ENCODE measurements at regions of chr19 and their contacts with region 1.

Region 1: GRCh38 chr19:32570081-32570785 is 10.8 kb upstream of the PDCD5 start:
- DNase-seq: peak in 1 of 2 donors; percentile 34
- ATAC-seq: peak in 7 of 8 donors; percentile 51 to 84 (median 76)
- H3K4me3 ChIP-seq: no peak overlapping the region
- H3K27ac ChIP-seq: no peak overlapping the region
- H3K4me1 ChIP-seq: peaks cover 0 to 3% (median 0%) of the 10 kb centered on the region in 9 donors
- H3K27me3 ChIP-seq: peaks cover 0 to 40% (median 32%) of the 10 kb centered on the region in 7 donors
- CTCF ChIP-seq: peak; percentile 14 to 76 (median 64)

Region 2: DNA sequence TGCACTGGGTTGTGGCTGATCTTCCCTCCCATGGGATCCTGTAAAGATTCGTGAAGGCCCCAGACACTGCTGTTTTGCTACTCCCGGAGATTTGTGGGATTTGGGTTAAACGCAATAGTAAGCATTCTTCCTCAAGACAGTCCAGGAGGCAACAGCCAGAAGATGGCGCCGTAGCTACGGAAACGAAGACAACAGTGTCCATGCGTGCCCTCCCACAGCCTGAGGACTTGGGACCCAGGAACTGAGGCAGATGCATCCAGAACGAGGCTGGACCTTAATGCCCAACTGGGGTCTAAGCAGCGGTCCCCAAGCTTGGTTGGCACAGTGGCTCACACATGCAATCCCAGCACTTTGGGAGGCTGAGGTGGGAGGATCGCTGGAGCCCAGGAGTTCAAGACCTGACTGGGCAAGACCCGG is 282.4 kb before region 1 on chr19:
- intact Hi-C with region 1: loop called in 9 of 10 experiments (anchors 2 to 10 kb)
- DNase-seq: peak; percentile 58 to 74
- ATAC-seq: peak; percentile 53 to 92 (median 84)
- H3K4me3 ChIP-seq: no peak overlapping the region
- H3K27ac ChIP-seq: peak overlapping the region in 3 of 10 donors; percentile 28 to 65 (median 33)
- H3K4me1 ChIP-seq: peaks cover 0 to 14% (median 0%) of the 10 kb centered on the region in 9 donors
- H3K27me3 ChIP-seq: peaks cover 0 to 48% (median 20%) of the 10 kb centered on the region in 7 donors
- CTCF ChIP-seq: peak in 7 of 9 donors; percentile 33 to 65 (median 55)

Region 3: GRCh38 chr19:32339988-32340874 is 230.0 kb before region 1 on chr19:
- intact Hi-C with region 1: loop called in 8 of 10 experiments (anchors 1 to 10 kb)
- DNase-seq: peak; percentile 68
- ATAC-seq: peak; percentile 55 to 91 (median 84)
- H3K4me3 ChIP-seq: no peak overlapping the region
- H3K27ac ChIP-seq: no peak overlapping the region
- H3K4me1 ChIP-seq: peaks cover 0 to 9% (median 0%) of the 10 kb centered on the region in 9 donors
- H3K27me3 ChIP-seq: peaks cover 0 to 95% (median 0%) of the 10 kb centered on the region in 7 donors
- CTCF ChIP-seq: peak; percentile 40 to 79 (median 71)

Region 4: DNA sequence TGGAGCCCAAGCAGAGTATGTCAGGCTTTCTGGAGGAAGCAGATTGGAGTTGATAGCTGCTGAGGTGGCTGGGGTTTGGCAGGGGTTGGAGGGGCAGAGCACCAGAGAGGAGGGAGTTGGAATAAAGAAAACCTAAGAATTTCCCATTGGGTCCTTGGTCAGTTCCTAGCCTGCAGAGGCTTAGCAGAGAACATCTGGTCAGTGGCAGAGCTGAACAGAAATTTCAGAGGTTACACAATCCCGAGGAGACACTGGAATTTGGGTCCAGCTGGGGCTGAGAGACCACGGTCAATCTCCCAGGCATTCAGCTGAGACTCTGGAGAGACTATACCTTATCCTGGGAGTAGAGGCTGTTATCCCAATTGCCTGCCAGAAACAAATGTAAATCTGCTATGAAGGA is 80.3 kb before region 1 on chr19:
- intact Hi-C with region 1: no loop called
- DNase-seq: no peak
- ATAC-seq: no peak
- H3K4me3 ChIP-seq: no peak overlapping the region
- H3K27ac ChIP-seq: no peak overlapping the region
- H3K4me1 ChIP-seq: no peaks in the 10 kb centered on the region
- H3K27me3 ChIP-seq: no peaks in the 10 kb centered on the region
- CTCF ChIP-seq: no peak

Region 5: GRCh38 chr19:32630338-32630737 is 60.1 kb after region 1 on chr19:
- intact Hi-C with region 1: no loop called
- DNase-seq: no peak
- ATAC-seq: no peak
- H3K4me3 ChIP-seq: no peak overlapping the region
- H3K27ac ChIP-seq: no peak overlapping the region
- H3K4me1 ChIP-seq: peaks cover 0 to 16% (median 0%) of the 10 kb centered on the region in 9 donors
- H3K27me3 ChIP-seq: no peaks in the 10 kb centered on the region
- CTCF ChIP-seq: no peak